ENCODE measurements at regions of chr1 and their contacts with region 1.

Region 1: GRCh38 chr1:229192031-229192430 is 78.9 kb upstream of the RAB4A start:
- DNase-seq: peak; percentile 83 to 91 (median 91)
- H3K4me3 ChIP-seq: no peak overlapping the region
- H3K4me3 Mint-ChIP-seq: peak overlapping the region in 1 of 2 donors; percentile 55
- H3K27ac ChIP-seq: peak overlapping the region; percentile 82 to 93
- H3K27ac Mint-ChIP-seq: peak overlapping the region; percentile 95 to 99 (median 97)
- H3K4me1 ChIP-seq: peaks cover 27 to 48% of the 10 kb centered on the region in 2 donors
- H3K4me1 Mint-ChIP-seq: peaks cover 44% of the 10 kb centered on the region
- H3K27me3 ChIP-seq: no peaks in the 10 kb centered on the region
- H3K27me3 Mint-ChIP-seq: peaks cover 0 to 2% (median 0%) of the 10 kb centered on the region in 3 donors
- CTCF ChIP-seq: no peak

Region 2: GRCh38 chr1:229130028-229130668 is 61.9 kb before region 1 on chr1:
- intact Hi-C with region 1: loop called in 1 of 2 experiments (anchors 5 kb)
- DNase-seq: peak; percentile 76 to 92 (median 88)
- H3K4me3 ChIP-seq: peak overlapping the region in 1 of 3 experiments; percentile 38
- H3K4me3 Mint-ChIP-seq: peak overlapping the region; percentile 60 to 84
- H3K27ac ChIP-seq: peak overlapping the region; percentile 54 to 79
- H3K27ac Mint-ChIP-seq: peak overlapping the region; percentile 84 to 98 (median 96)
- H3K4me1 ChIP-seq: peaks cover 73 to 74% of the 10 kb centered on the region in 2 donors
- H3K4me1 Mint-ChIP-seq: peaks cover 69% of the 10 kb centered on the region
- H3K27me3 ChIP-seq: no peaks in the 10 kb centered on the region
- H3K27me3 Mint-ChIP-seq: peaks cover 0 to 12% (median 3%) of the 10 kb centered on the region in 3 donors
- CTCF ChIP-seq: no peak

Region 3: DNA sequence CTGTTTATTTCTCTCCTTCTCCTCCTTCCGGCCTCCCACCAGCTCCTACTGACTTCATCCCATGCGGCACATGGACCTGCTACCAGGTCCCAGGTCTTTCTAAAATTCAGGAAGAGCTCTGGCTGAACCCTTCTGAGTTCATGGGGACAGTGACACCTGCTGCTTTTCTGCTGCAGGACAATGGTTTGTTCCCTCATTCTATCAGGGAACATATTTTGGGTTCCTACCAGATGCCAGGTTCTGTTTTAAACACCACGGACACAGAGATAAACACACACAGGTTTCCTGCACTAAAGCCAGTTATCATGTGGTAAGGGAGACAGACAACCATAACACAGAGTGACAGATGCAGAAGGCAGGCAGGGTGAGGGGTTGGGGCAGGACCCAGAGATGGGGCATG is 35.2 kb before region 1 on chr1:
- intact Hi-C with region 1: loop called in 1 of 2 experiments (anchors 1 kb)
- DNase-seq: peak in 2 of 3 donors; percentile 18 to 34
- H3K4me3 ChIP-seq: no peak overlapping the region
- H3K4me3 Mint-ChIP-seq: no peak overlapping the region
- H3K27ac ChIP-seq: peak overlapping the region; percentile 85 to 95
- H3K27ac Mint-ChIP-seq: peak overlapping the region; percentile 51 to 97 (median 95)
- H3K4me1 ChIP-seq: peaks cover 68 to 76% of the 10 kb centered on the region in 2 donors
- H3K4me1 Mint-ChIP-seq: peaks cover 72% of the 10 kb centered on the region
- H3K27me3 ChIP-seq: no peaks in the 10 kb centered on the region
- H3K27me3 Mint-ChIP-seq: peaks cover 0 to 4% (median 2%) of the 10 kb centered on the region in 3 donors
- CTCF ChIP-seq: peak; percentile 53